ENCODE measurements at regions of chr5 and their contacts with region 1.

Region 1: DNA sequence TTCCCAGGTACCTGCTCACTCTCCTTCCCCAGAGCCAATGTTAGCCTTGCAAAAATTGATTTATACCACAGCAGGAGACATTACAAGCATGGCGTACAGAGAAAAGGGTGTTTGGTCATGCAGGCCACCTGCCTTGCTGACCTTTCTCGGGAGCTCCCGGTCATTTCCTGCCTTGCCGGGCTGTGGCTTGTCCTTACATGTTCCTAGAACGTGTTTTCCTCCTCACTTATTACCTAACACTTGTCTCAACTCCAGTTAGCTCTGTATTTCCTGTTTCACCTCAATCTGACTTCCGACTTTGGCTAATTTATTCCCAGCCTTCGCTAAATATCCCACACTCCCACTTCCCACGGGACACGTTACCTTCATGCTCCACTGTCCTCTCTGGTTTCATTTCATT is 282.5 kb downstream of the ICE1 start:
- DNase-seq: no peak

Region 2: DNA sequence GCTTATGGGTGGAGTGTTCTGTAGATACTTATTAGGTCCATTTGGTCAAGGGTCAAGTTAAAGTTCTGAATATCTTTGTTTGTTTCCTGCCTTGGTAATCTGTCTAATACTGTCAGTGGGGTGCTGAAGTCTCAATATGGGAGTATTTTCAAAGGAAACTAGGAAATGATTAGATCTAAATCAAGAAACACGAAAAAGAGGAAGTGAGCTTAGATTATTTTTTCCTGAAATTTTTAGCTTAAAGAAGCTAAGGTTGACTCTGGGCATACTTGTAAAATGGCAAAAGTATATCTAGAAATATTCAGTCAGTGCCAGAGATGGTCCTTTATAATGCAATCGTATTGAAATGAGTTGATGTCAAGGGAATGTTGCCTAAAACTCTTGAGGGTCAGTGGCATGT is 31.0 kb after region 1 on chr5:
- intact Hi-C with region 1: loop called in 1 of 2 experiments (anchors 1 kb)
- DNase-seq: no peak

Region 3: GRCh38 chr5:6675763-6676499 is 970.9 kb after region 1 on chr5:
- intact Hi-C with region 1: no loop called
- DNase-seq: no peak

Measured in posterior vena cava (tissue), 2 donors.